Cardiac septum (tissue), 1 donor: ENCODE measurements at regions of chr22 and their contacts with region 1.

Region 1: GRCh38 chr22:35330258-35330861 is 30.7 kb downstream of the TOM1 start:
- DNase-seq: peak; percentile 93

Region 2: DNA sequence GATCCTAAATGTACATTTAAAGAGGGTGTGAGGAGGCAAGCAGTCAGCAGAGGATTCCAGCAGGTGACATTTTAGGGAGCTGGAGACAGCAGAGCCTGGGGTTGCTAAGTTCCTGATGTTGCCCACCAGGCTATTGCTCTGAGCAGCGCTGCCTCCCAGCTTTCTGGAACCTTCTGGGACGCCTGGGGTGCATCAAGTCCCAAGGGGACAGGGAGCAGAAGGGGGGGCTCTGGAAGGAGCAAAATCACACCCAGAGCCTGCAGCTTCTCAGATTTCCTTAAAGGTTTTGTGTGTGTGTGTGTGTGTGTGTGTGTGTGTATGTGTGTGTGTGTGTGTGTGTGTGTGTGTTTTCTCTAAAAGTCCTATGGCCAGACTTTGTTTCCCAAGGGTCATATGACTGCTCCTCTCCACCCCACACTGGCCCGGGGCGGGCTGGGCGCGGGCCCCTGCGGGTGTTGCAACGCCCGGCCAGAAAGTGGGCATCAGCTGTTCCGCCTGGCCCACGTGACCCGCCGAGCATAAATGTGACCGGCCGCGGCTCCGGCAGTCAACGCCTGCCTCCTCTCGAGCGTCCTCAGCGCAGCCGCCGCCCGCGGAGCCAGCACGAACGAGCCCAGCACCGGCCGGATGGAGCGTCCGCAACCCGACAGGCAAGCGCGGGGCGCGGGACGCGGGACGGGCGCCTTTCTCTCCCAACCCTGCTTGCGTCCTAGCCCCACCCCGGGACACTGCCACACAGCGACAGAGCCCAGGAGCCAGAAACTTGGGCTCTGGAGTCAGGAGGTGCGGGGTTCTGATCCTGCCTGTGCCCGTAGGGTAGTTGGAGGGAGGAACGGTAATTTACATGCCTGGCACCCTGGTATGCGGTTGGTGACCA is 50.4 kb after region 1 on chr22 and contains the start of gene HMOX1:
- intact Hi-C with region 1: loop called (anchors 10 kb)
- DNase-seq: peak; percentile 94
- total RNA-seq, gene HMOX1: 17.3 TPM

Region 3: GRCh38 chr22:35394810-35395563 is 64.6 kb after region 1 on chr22:
- intact Hi-C with region 1: no loop called
- DNase-seq: no peak